BJ (cell line): ENCODE measurements at regions of chr13 and their contacts with region 1.

Region 1: GRCh38 chr13:20924758-20925394 is 22.3 kb upstream of the XPO4 start:
- DNase-seq: no peak
- H3K4me3 ChIP-seq: no peak overlapping the region
- H3K27me3 ChIP-seq: peaks cover 4% of the 10 kb centered on the region
- CTCF ChIP-seq: peak; percentile 78

Region 2: GRCh38 chr13:20495082-20496023 is 429.5 kb before region 1 on chr13:
- CTCF ChIA-PET with region 1: interaction called, 114 read pairs
- POLR2A ChIA-PET with region 1: no interaction called
- DNase-seq: no peak
- H3K4me3 ChIP-seq: no peak overlapping the region
- H3K27me3 ChIP-seq: no peaks in the 10 kb centered on the region
- CTCF ChIP-seq: peak; percentile 93

Region 3: DNA sequence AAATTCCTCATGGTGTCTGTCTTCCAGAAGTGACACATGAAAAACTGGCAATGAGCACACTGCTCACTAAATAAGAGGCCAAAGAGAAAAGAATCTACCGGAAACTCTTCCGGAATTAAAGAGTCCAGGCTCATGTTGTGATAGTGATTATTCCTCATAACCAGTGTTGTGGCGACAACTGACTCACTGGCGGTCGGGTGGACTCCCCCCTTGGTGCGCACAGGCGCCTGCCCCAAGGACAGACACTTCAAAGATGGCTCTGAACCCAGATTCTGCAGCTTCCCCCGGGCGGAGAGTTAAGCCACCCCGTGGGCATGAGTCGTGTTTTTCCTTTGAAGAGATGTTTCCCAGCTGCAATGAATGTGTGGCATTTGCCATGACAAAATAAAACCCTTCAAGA is 211.1 kb before region 1 on chr13:
- CTCF ChIA-PET with region 1: interaction called, 12 read pairs
- POLR2A ChIA-PET with region 1: no interaction called
- DNase-seq: peak; percentile 18
- H3K4me3 ChIP-seq: no peak overlapping the region
- H3K27me3 ChIP-seq: peaks cover 1% of the 10 kb centered on the region; the same call in 1 of the 2 replicates
- CTCF ChIP-seq: no peak

Region 4: DNA sequence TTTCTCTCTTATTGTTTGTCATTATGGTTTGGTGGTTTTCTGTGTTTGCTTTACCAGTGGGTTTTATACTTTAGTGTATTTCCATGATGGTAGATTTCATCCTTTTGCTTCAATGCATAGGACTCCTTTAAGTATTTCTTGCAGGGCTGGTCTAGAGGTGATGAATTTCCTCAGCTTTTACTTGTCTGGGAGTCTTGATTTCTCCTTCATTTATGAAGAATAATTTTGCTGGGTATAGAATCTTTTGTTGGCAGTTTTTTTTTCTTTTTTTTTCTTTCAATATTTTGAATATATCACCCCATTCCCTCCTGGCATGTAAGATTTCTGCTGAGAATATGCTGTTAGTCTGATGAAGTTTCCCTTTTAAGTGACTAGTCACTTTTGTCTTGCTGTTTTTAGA is 170.9 kb before region 1 on chr13:
- CTCF ChIA-PET with region 1: no interaction called
- POLR2A ChIA-PET with region 1: no interaction called
- DNase-seq: no peak
- H3K4me3 ChIP-seq: no peak overlapping the region
- H3K27me3 ChIP-seq: no peaks in the 10 kb centered on the region
- CTCF ChIP-seq: no peak

Region 5: GRCh38 chr13:20902438-20903163 is 22.3 kb before region 1 on chr13 and contains the start of gene XPO4:
- CTCF ChIA-PET with region 1: interaction called, 15 read pairs
- POLR2A ChIA-PET with region 1: no interaction called
- DNase-seq: peak; percentile 18
- H3K4me3 ChIP-seq: peak within 1 kb of the TSS; percentile 84
- H3K27me3 ChIP-seq: no peaks in the 10 kb centered on the region
- CTCF ChIP-seq: no peak
- polyA plus RNA-seq, gene XPO4: 4.9 and 10.8 TPM in 2 replicates

Region 6: DNA sequence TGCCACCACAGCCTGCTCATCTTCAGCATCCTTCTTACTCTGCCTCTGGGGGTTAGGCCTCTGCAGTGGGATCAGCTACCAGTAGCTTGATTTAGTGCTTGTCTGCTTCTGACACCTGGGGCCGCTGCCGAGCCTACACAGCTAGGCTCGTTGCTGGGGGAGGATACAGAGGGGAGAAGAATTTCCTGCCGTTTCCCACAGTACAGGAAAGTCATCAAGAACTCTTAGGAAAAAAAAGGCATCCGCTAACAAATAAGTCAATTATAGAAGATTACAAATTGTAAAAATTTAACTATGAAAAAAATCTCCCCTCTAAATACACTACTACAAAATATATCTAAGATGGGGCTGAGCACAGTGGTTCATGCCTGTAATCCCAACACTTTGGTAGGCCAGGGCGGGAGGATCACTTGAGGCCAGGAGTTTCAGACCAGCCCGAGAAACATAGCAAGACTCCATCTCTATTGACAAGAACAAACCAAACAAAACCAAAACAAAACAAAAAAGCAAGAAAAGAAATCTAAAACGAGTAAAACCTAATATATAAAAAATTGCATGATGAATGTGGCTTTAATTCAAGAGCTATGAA is 109.8 kb after region 1 on chr13:
- CTCF ChIA-PET with region 1: no interaction called
- POLR2A ChIA-PET with region 1: no interaction called
- DNase-seq: no peak
- H3K4me3 ChIP-seq: no peak overlapping the region
- H3K27me3 ChIP-seq: no peaks in the 10 kb centered on the region
- CTCF ChIP-seq: no peak